ENCODE measurements at regions of chr11 and their contacts with region 1.

Region 1: GRCh38 chr11:60762851-60763691 is 6.4 kb downstream of the MS4A15 start:
- DNase-seq: peak; percentile 80
- ATAC-seq: peak; percentile 89
- H3K4me3 ChIP-seq: peak overlapping the region in 1 of 5 experiments; percentile 10
- H3K4me3 Mint-ChIP-seq: peak overlapping the region; percentile 57
- H3K27ac ChIP-seq: no peak overlapping the region
- H3K27ac Mint-ChIP-seq: peak overlapping the region; percentile 75
- H3K4me1 ChIP-seq: peaks cover 25 to 30% of the 10 kb centered on the region in 2 donors
- H3K4me1 Mint-ChIP-seq: peaks cover 50% of the 10 kb centered on the region
- H3K27me3 ChIP-seq: peaks cover 0 to 18% (median 1%) of the 10 kb centered on the region in 4 experiments
- H3K27me3 Mint-ChIP-seq: peaks cover 26% of the 10 kb centered on the region
- CTCF ChIP-seq: peak; percentile 66

Region 2: GRCh38 chr11:60657888-60658287 is 105.2 kb before region 1 on chr11:
- CTCF ChIA-PET with region 1: no interaction called
- POLR2A ChIA-PET with region 1: no interaction called
- intact Hi-C with region 1: no loop called
- DNase-seq: no peak
- ATAC-seq: no peak
- H3K4me3 ChIP-seq: no peak overlapping the region
- H3K4me3 Mint-ChIP-seq: no peak overlapping the region
- H3K27ac ChIP-seq: no peak overlapping the region
- H3K27ac Mint-ChIP-seq: no peak overlapping the region
- H3K4me1 ChIP-seq: no peaks in the 10 kb centered on the region
- H3K4me1 Mint-ChIP-seq: no peaks in the 10 kb centered on the region
- H3K27me3 ChIP-seq: peaks cover 0 to 5% (median 2%) of the 10 kb centered on the region in 4 experiments
- H3K27me3 Mint-ChIP-seq: peaks cover 25% of the 10 kb centered on the region
- CTCF ChIP-seq: no peak

Region 3: DNA sequence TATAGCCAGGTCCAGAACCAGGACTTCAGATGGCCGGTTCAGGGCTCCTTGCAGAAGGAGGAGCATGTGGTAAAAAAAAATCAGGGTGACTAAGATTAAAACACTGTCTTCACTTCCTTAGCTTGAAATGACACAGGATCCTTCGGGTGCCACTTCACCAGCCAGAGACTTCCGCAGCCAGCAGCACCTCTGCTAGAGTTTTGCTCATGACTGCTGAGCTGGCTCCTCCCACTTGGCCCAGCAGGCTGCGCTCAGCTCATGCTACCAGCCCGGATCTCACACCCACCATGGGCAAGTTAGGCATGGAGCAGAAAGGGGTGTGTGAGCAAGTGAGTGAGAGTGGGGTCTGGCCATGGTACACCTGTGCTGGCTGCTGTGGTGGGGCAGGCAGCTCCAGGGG is 45.1 kb before region 1 on chr11:
- CTCF ChIA-PET with region 1: no interaction called
- POLR2A ChIA-PET with region 1: no interaction called
- intact Hi-C with region 1: no loop called
- DNase-seq: no peak
- ATAC-seq: no peak
- H3K4me3 ChIP-seq: no peak overlapping the region
- H3K4me3 Mint-ChIP-seq: no peak overlapping the region
- H3K27ac ChIP-seq: no peak overlapping the region
- H3K27ac Mint-ChIP-seq: no peak overlapping the region
- H3K4me1 ChIP-seq: no peaks in the 10 kb centered on the region
- H3K4me1 Mint-ChIP-seq: no peaks in the 10 kb centered on the region
- H3K27me3 ChIP-seq: peaks cover 0 to 8% (median 2%) of the 10 kb centered on the region in 4 experiments
- H3K27me3 Mint-ChIP-seq: peaks cover 43% of the 10 kb centered on the region
- CTCF ChIP-seq: no peak

Region 4: GRCh38 chr11:60775420-60775961 is 12.4 kb after region 1 on chr11:
- CTCF ChIA-PET with region 1: interaction called, 102 read pairs
- POLR2A ChIA-PET with region 1: no interaction called
- intact Hi-C with region 1: no loop called
- DNase-seq: peak; percentile 89
- ATAC-seq: peak; percentile 96
- H3K4me3 ChIP-seq: no peak overlapping the region
- H3K4me3 Mint-ChIP-seq: no peak overlapping the region
- H3K27ac ChIP-seq: no peak overlapping the region
- H3K27ac Mint-ChIP-seq: peak overlapping the region; percentile 1
- H3K4me1 ChIP-seq: peaks cover 3 to 11% of the 10 kb centered on the region in 2 donors
- H3K4me1 Mint-ChIP-seq: peaks cover 15% of the 10 kb centered on the region
- H3K27me3 ChIP-seq: peaks cover 0 to 9% (median 1%) of the 10 kb centered on the region in 4 experiments
- H3K27me3 Mint-ChIP-seq: peaks cover 12% of the 10 kb centered on the region
- CTCF ChIP-seq: peak; percentile 88